ENCODE measurements at regions of chr2 and their contacts with region 1.

Region 1: GRCh38 chr2:225889446-225889850 is 489.9 kb downstream of the NYAP2 start:
- DNase-seq: peak; percentile 2 to 58
- H3K4me3 ChIP-seq: no peak overlapping the region
- H3K27ac ChIP-seq: peak overlapping the region; percentile 48
- H3K4me1 ChIP-seq: peaks cover 8% of the 10 kb centered on the region; the same call in 1 of the 2 replicates
- H3K27me3 ChIP-seq: no peaks in the 10 kb centered on the region
- CTCF ChIP-seq: peak; percentile 88

Region 2: GRCh38 chr2:226118471-226119430 is 229.3 kb after region 1 on chr2:
- CTCF ChIA-PET with region 1: interaction called, 5 read pairs
- POLR2A ChIA-PET with region 1: no interaction called
- intact Hi-C with region 1: loop called (anchors 5 kb)
- DNase-seq: peak; percentile 33 to 92
- H3K4me3 ChIP-seq: peak overlapping the region; percentile 27; the same call in 1 of the 2 replicates
- H3K27ac ChIP-seq: peak overlapping the region; percentile 93
- H3K4me1 ChIP-seq: peaks cover 64% of the 10 kb centered on the region
- H3K27me3 ChIP-seq: no peaks in the 10 kb centered on the region
- CTCF ChIP-seq: no peak

Region 3: DNA sequence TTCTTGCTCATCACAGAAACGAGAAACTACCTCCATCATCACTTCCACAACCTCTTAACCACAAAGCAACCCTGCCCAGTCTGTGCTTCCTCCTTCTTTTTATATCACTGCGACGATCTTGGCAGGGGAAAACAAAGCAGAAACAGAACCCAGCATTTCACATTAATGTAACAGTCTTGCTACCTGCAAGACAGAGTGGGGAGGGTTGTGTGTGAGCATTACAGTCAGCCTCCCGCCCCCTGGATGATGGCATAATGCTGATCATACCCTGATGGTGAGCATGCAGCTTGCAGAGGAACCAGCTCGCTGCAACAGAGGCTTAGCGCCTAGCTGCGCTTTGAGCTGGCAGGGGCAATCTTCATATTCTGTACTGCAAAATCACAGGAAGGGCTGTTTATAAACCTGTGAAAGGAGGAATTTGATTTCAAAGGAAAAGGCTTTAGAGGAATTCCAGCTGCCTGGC is 534.1 kb after region 1 on chr2:
- CTCF ChIA-PET with region 1: no interaction called
- POLR2A ChIA-PET with region 1: no interaction called
- intact Hi-C with region 1: loop called (anchors 10 kb)
- DNase-seq: peak in 1 of 2 experiments; percentile 41
- H3K4me3 ChIP-seq: no peak overlapping the region
- H3K27ac ChIP-seq: no peak overlapping the region
- H3K4me1 ChIP-seq: peaks cover 31% of the 10 kb centered on the region
- H3K27me3 ChIP-seq: no peaks in the 10 kb centered on the region
- CTCF ChIP-seq: no peak

Region 4: GRCh38 chr2:226984750-226985582 is 1095.5 kb after region 1 on chr2:
- CTCF ChIA-PET with region 1: no interaction called
- POLR2A ChIA-PET with region 1: no interaction called
- intact Hi-C with region 1: loop called (anchors 10 kb)
- DNase-seq: peak; percentile 22 to 43
- H3K4me3 ChIP-seq: no peak overlapping the region
- H3K27ac ChIP-seq: no peak overlapping the region
- H3K4me1 ChIP-seq: no peaks in the 10 kb centered on the region
- H3K27me3 ChIP-seq: no peaks in the 10 kb centered on the region
- CTCF ChIP-seq: peak; percentile 72

Measured in PC-9 (cell line).